Right ventricle myocardium inferior (tissue), 1 donor: ENCODE measurements at regions of chr13 and their contacts with region 1.

Region 1: GRCh38 chr13:33875618-33876401 is 57.9 kb downstream of the RFC3 start:
- DNase-seq: no peak
- ATAC-seq: peak; percentile 62

Region 2: GRCh38 chr13:33707449-33707848 is 168.4 kb before region 1 on chr13:
- intact Hi-C with region 1: no loop called
- DNase-seq: no peak
- ATAC-seq: no peak

Region 3: GRCh38 chr13:33855371-33855895 is 20.4 kb before region 1 on chr13:
- intact Hi-C with region 1: loop called (anchors 1 kb)
- DNase-seq: no peak
- ATAC-seq: no peak

Region 4: GRCh38 chr13:33891196-33891742 is 15.5 kb after region 1 on chr13:
- intact Hi-C with region 1: no loop called
- DNase-seq: no peak
- ATAC-seq: no peak